IMR-90 (cell line): ENCODE measurements at regions of chr5 and their contacts with region 1.

Region 1: DNA sequence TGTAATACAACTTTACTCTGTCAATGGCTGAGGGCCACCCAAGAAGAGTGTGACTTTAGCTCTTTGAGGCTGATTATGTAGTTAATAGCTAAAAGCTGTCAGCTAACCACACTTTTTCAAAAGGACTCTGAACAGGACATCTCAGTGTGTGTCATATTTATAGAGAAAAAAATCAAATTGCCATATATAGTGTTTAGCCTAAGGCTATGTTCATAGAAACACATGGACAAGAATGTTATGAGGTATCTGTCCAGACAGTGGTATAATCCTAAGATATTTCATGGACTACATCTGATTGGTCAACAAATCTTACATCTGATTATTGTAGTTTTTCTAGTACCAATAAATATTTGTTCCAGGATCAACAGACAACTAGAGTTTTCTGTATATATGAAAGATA is 42.1 kb upstream of the CDH18 start:
- DNase-seq: no peak
- ATAC-seq: no peak
- H3K4me3 ChIP-seq: no peak overlapping the region
- H3K27ac ChIP-seq: no peak overlapping the region
- H3K4me1 ChIP-seq: no peaks in the 10 kb centered on the region
- H3K27me3 ChIP-seq: no peaks in the 10 kb centered on the region
- CTCF ChIP-seq: no peak
- POLR2A ChIP-seq: no peak
- RAD21 ChIP-seq: no peak

Region 2: DNA sequence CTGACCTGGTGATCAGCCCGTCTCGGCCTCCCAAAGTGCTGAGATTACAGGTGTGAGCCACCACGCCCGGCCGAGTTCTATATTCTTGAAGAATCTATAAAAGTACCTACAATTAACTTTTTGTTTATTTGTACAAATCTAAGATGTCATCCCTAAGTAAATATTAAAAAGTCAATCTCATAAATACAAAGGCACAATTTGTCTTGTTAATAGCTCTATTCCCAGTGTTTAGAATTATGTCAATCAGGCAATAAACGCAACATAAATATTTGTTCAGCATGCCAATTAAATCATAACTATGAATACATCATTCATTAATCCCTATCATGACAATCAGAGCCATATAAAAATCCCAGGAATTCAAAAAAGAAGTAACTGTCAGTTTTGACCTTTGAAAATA is 26.8 kb after region 1 on chr5:
- CTCF ChIA-PET with region 1: no interaction called
- POLR2A ChIA-PET with region 1: interaction called, 14 read pairs
- dilution Hi-C with region 1: no loop called
- in situ Hi-C with region 1: no loop called
- intact Hi-C with region 1: no loop called
- DNase-seq: no peak
- ATAC-seq: no peak
- H3K4me3 ChIP-seq: no peak overlapping the region
- H3K27ac ChIP-seq: no peak overlapping the region
- H3K4me1 ChIP-seq: no peaks in the 10 kb centered on the region
- H3K27me3 ChIP-seq: no peaks in the 10 kb centered on the region
- CTCF ChIP-seq: no peak
- POLR2A ChIP-seq: no peak
- RAD21 ChIP-seq: no peak